Right ventricle myocardium inferior (tissue), 1 donor: ENCODE measurements at regions of chr1 and their contacts with region 1.

Region 1: GRCh38 chr1:8423650-8424538 is 106.0 kb downstream of the SLC45A1 start:
- DNase-seq: peak; percentile 80
- ATAC-seq: peak; percentile 33

Region 2: DNA sequence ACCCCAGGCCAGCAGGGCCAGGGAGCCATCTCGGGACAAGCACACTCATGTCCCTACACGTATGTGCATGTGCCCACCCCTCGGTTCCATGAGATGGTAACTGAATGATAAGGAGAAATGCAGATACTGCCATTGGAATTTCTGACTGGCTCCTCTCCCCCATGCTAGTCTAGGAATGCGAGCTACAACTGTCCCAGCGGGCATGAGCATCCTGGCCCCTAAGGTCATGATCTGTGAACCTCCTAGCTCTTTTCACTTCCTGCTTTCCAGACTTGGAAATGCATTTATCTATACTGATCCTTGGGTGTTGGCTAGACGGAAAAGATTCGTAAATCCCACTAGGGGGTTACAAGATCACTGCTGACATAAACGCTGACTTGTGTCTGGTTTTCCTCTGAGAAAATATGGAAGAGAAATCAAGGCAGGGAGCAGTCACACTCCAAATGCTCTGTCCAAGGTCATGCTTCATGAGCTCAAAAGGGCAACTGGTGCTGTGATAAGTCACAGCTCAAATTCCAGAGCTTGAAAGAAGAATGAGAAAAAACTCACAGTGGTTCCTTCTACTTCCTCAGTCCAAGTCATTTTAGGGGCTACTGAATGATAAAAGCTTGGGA is 56.2 kb before region 1 on chr1:
- intact Hi-C with region 1: loop called (anchors 2 kb)
- DNase-seq: no peak
- ATAC-seq: no peak

Region 3: GRCh38 chr1:8463144-8463927 is 39.4 kb after region 1 on chr1:
- intact Hi-C with region 1: loop called (anchors 5 kb)
- DNase-seq: no peak
- ATAC-seq: peak; percentile 63

Region 4: DNA sequence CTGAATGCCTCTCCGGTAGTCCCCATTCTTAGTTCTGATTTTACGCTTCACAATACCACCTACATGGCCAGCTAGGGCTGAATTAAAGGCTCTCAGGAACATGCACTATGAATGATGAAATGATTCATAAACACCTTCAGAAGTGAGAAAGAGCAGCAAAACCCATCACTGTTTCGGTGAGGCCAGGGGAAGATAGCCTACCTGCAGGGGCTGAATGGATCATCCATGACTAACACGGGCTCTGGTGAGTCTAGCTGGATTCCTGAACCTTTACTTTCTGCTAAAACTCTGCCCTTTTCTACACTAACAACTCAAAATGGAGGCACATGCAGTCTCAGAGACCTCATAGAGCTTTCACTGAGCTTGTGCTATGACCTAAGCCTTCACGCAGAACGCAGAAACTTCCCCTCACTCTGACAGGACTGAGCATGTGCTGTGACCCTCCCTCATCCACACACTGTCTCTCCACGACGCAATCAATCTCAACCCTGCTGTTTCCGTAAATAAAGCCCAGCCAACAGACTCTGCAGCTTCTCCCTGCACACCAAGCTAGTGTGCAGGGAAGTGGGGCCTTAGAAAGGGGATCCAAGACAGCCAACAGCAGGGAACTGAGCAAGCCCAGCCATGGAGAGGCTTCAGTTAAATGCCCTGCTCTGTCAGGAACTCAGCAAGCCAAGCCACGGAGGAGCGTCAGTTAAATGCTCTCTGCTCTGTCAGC is 101.8 kb after region 1 on chr1:
- intact Hi-C with region 1: loop called (anchors 5 kb)
- DNase-seq: peak; percentile 82
- ATAC-seq: peak; percentile 99

Region 5: GRCh38 chr1:8702850-8703810 is 279.2 kb after region 1 on chr1:
- intact Hi-C with region 1: loop called (anchors 2 kb)
- DNase-seq: peak; percentile 95
- ATAC-seq: peak; percentile 96